ENCODE measurements at regions of chr12 and their contacts with region 1.

Region 1: GRCh38 chr12:49098035-49098451 is 3.4 kb upstream of the DHH start:
- DNase-seq: peak; percentile 74
- H3K4me3 Mint-ChIP-seq: no peak overlapping the region
- H3K27ac Mint-ChIP-seq: no peak overlapping the region
- H3K4me1 Mint-ChIP-seq: peaks cover 18% of the 10 kb centered on the region
- H3K27me3 Mint-ChIP-seq: peaks cover 32% of the 10 kb centered on the region

Region 2: DNA sequence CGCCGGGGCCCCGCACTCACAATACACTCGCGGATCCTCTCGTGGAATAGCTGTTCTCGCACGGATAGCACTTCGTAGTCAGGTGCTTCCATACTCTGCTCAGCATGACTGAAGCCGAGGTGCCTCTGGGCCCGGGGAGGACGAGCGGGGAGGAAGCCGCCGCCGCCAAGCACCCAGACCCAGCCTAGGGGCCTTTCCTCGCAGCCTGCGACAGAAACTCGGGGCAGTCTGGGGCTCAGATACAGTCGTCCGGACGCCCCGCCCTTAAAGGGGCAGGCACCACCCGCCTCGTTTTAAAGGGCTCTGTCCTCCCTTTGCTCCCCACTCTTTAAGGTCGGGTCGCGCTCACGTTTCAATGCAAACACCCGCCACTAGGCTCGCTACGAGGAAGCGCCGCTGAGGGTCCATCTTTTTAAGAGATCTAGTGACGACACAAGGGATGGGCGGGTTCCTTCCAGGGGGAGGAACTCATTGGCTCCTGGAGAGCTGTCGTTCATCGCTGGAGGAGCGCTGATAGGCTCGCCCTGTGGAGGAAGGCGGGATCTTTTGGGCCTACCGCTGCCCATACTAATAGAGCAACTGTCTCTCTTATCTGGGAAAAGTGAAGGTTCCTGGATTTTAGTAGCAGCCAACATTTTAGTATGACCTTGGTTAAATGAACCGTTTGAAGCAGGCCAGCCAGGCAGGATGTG is 12.6 kb after region 1 on chr12 and contains the start of gene LMBR1L:
- CTCF ChIA-PET with region 1: interaction called, 38 read pairs
- DNase-seq: peak; percentile 99
- H3K4me3 Mint-ChIP-seq: peak within 1 kb of the TSS; percentile 94
- H3K27ac Mint-ChIP-seq: peak within 1 kb of the TSS; percentile 94
- H3K4me1 Mint-ChIP-seq: peaks cover 28% of the 10 kb centered on the region
- H3K27me3 Mint-ChIP-seq: peaks cover 15% of the 10 kb centered on the region

Measured in activated naive CD4-positive, alpha-beta T cell treated with anti-CD3 and anti-CD28 coated beads, Interleukin-2, amount 10 ng/mL, durations not matched to agents 7 days and 5 days (primary cell).